ENCODE measurements at regions of chr19 and their contacts with region 1.

Region 1: GRCh38 chr19:18450931-18451845 is 13.3 kb upstream of the ISYNA1 start:
- DNase-seq: peak in 1 of 2 experiments; percentile 64
- ATAC-seq: peak; percentile 79 to 92
- H3K4me3 ChIP-seq: no peak overlapping the region
- H3K27ac ChIP-seq: peak overlapping the region in 1 of 2 experiments; percentile 48; a peak in 1 of 6 replicates
- H3K4me1 ChIP-seq: peaks cover 11% of the 10 kb centered on the region
- CTCF ChIP-seq: peak; percentile 77
- EP300 ChIP-seq: no peak
- POLR2A ChIP-seq: no peak
- RAD21 ChIP-seq: peak; percentile 80

Region 2: GRCh38 chr19:18173572-18174288 is 277.5 kb before region 1 on chr19 and contains the start of gene IFI30:
- CTCF ChIA-PET with region 1: no interaction called
- POLR2A ChIA-PET with region 1: no interaction called
- DNase-seq: peak; percentile 45 to 68
- ATAC-seq: peak; percentile 70 to 89
- H3K4me3 ChIP-seq: peak within 1 kb of the TSS; percentile 62
- H3K27ac ChIP-seq: peak within 1 kb of the TSS; percentile 52 to 77
- H3K4me1 ChIP-seq: peaks cover 4% of the 10 kb centered on the region; the same call in 1 of the 3 replicates
- CTCF ChIP-seq: no peak
- EP300 ChIP-seq: no peak
- POLR2A ChIP-seq: peak; percentile 73
- RAD21 ChIP-seq: no peak
- polyA plus RNA-seq, gene IFI30: 11.2 and 12.3 TPM in 2 replicates

Region 3: GRCh38 chr19:18233224-18233825 is 217.9 kb before region 1 on chr19:
- CTCF ChIA-PET with region 1: no interaction called
- POLR2A ChIA-PET with region 1: no interaction called
- DNase-seq: peak; percentile 50 to 69
- ATAC-seq: peak; percentile 66 to 72; a peak in 5 of 6 replicates
- H3K4me3 ChIP-seq: no peak overlapping the region
- H3K27ac ChIP-seq: no peak overlapping the region
- H3K4me1 ChIP-seq: peaks cover 20% of the 10 kb centered on the region
- CTCF ChIP-seq: no peak
- EP300 ChIP-seq: no peak
- POLR2A ChIP-seq: no peak
- RAD21 ChIP-seq: no peak

Region 4: GRCh38 chr19:18397242-18398202 is 53.7 kb before region 1 on chr19 and contains the start of gene LRRC25:
- CTCF ChIA-PET with region 1: no interaction called
- POLR2A ChIA-PET with region 1: no interaction called
- DNase-seq: no peak
- ATAC-seq: no peak
- H3K4me3 ChIP-seq: no peak within 1 kb of the TSS
- H3K27ac ChIP-seq: peak within 1 kb of the TSS in 1 of 2 experiments; percentile 91; a peak in 3 of 6 replicates
- H3K4me1 ChIP-seq: peaks cover 31% of the 10 kb centered on the region
- CTCF ChIP-seq: no peak
- EP300 ChIP-seq: no peak
- POLR2A ChIP-seq: no peak
- RAD21 ChIP-seq: no peak
- polyA plus RNA-seq, gene LRRC25: not detected in 2 replicates

Region 5: DNA sequence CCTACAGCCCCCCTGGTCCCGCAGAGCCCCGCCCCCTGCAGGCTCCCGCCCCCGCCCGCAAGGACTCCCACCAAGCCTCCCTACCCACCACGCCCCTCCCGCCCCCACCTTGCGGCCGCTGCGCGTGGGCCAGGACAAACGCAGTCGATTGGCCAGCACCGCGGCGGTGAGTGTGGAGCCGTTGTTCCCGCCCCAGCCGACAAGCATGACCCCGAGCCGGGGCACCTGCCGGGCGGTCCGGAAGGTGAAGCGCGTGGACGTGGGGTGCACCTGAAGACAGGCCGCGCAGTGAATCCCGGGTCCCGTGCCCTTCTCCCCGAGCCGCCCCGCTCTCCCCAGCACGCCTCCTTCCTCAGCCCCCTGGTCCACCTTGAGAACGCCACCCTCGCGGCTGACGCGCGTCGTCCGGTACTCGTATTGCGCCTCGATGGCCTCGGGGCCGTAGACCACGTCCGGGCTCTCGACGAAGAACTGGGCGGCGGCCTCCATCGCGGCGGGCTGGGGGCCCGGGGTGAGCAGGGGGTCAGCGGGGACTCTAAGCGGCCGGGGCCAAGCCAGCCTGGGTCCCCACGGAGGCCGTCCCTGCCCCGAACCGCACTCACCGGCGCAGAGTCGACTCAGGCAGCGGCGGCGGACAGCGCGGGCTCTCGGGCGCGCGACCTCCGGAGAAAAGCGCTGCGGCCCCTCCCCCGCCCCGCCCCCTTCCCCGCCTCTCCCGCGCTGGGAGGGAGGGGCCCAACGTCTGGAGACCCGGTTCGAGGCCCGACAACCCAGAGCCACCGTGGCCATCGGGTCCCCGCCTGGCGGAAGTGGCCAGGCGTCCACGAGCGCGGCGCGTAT is 13.5 kb before region 1 on chr19 and contains the start of gene ISYNA1:
- CTCF ChIA-PET with region 1: interaction called, 18 read pairs
- POLR2A ChIA-PET with region 1: no interaction called
- DNase-seq: peak in 1 of 2 experiments; percentile 69
- ATAC-seq: peak; percentile 30 to 62
- H3K4me3 ChIP-seq: peak within 1 kb of the TSS; percentile 76
- H3K27ac ChIP-seq: peak within 1 kb of the TSS; percentile 82 to 96
- H3K4me1 ChIP-seq: peaks cover 30% of the 10 kb centered on the region
- CTCF ChIP-seq: no peak
- EP300 ChIP-seq: no peak
- POLR2A ChIP-seq: peak; percentile 16; the same call in 1 of the 2 replicates
- RAD21 ChIP-seq: no peak
- polyA plus RNA-seq, gene ISYNA1: 17.6 and 18.0 TPM in 2 replicates

Region 6: GRCh38 chr19:18494267-18494607 is 43.0 kb after region 1 on chr19:
- CTCF ChIA-PET with region 1: interaction called, 11 read pairs
- POLR2A ChIA-PET with region 1: no interaction called
- DNase-seq: no peak
- ATAC-seq: no peak
- H3K4me3 ChIP-seq: no peak overlapping the region
- H3K27ac ChIP-seq: no peak overlapping the region
- H3K4me1 ChIP-seq: peaks cover 12% of the 10 kb centered on the region
- CTCF ChIP-seq: no peak
- EP300 ChIP-seq: no peak
- POLR2A ChIP-seq: no peak
- RAD21 ChIP-seq: no peak

Region 7: GRCh38 chr19:18594096-18594823 is 143.1 kb after region 1 on chr19:
- CTCF ChIA-PET with region 1: interaction called, 14 read pairs
- POLR2A ChIA-PET with region 1: no interaction called
- DNase-seq: peak; percentile 44 to 57
- ATAC-seq: peak; percentile 25 to 52; a peak in 5 of 6 replicates
- H3K4me3 ChIP-seq: peak overlapping the region; percentile 29; the same call in 2 of the 3 replicates
- H3K27ac ChIP-seq: peak overlapping the region; percentile 66 to 84
- H3K4me1 ChIP-seq: peaks cover 9% of the 10 kb centered on the region; the same call in 1 of the 3 replicates
- CTCF ChIP-seq: peak; percentile 70
- EP300 ChIP-seq: no peak
- POLR2A ChIP-seq: no peak
- RAD21 ChIP-seq: peak; percentile 56 to 67

Measured in A549 (cell line).